Cardiac septum (tissue), 1 donor: ENCODE measurements at regions of chr4 and their contacts with region 1.

Region 1: GRCh38 chr4:41257257-41257901 is 651 bp downstream of the UCHL1 start:
- DNase-seq: no peak

Region 2: GRCh38 chr4:41882625-41883347 is 625.4 kb after region 1 on chr4:
- intact Hi-C with region 1: loop called (anchors 10 kb)
- DNase-seq: no peak